ENCODE measurements at regions of chr9 and their contacts with region 1.

Region 1: DNA sequence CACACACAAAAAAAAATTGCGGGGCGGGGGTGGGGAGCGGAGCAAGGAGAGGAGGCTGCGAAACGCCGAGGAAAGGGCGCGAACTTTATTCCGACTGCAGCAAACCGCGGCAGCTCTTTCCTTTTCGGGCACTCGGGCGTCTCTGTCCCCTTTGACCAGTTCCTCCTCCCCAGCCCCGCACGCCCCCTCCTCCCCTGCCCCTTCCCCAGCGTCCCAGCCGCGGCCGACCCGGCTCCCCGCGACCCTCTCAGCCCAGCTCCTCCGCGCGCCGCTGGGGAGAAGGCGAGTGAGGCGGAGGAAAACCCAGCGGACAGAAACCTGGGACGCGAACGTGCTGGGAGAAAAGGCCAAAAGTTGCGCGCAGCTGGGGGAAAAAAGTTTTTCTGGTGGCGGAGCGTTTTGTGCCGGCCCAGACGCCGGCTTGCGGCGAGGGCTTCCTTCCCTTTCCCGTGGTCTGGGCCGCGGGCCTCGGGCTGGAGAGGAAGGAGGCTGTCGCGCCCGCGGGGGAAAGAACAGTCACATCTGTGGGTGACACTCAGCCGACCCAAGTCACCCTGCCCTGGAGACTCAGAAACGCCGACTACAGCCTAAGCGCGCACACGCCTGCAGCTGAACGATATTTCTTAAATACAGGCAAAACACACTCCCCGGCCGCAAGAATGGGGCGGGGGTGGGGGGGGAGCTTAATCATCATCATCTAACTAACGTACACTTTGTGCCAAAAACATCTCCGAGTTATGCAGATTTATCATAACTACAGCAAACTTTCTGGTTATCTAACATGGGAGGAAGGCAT is 1.1 kb upstream of the BNC2 start:
- DNase-seq: peak; percentile 41 to 55
- ATAC-seq: peak; percentile 67 to 78 (median 75)
- H3K4me3 ChIP-seq: peak overlapping the region; percentile 57
- H3K4me3 Mint-ChIP-seq: peak overlapping the region; percentile 99
- H3K27ac ChIP-seq: peak overlapping the region; percentile 11
- H3K27ac Mint-ChIP-seq: peak overlapping the region; percentile 79 to 84
- H3K4me1 ChIP-seq: peaks cover 22% of the 10 kb centered on the region
- H3K4me1 Mint-ChIP-seq: peaks cover 25 to 32% of the 10 kb centered on the region in 2 donors
- H3K27me3 ChIP-seq: peaks cover 6% of the 10 kb centered on the region
- H3K27me3 Mint-ChIP-seq: peaks cover 0 to 3% of the 10 kb centered on the region in 2 donors
- CTCF ChIP-seq: no peak

Region 2: GRCh38 chr9:16145196-16145950 is 726.2 kb before region 1 on chr9:
- intact Hi-C with region 1: no loop called
- DNase-seq: no peak
- ATAC-seq: no peak
- H3K4me3 ChIP-seq: no peak overlapping the region
- H3K4me3 Mint-ChIP-seq: no peak overlapping the region
- H3K27ac ChIP-seq: no peak overlapping the region
- H3K27ac Mint-ChIP-seq: no peak overlapping the region
- H3K4me1 ChIP-seq: no peaks in the 10 kb centered on the region
- H3K4me1 Mint-ChIP-seq: no peaks in the 10 kb centered on the region
- H3K27me3 ChIP-seq: no peaks in the 10 kb centered on the region
- H3K27me3 Mint-ChIP-seq: peaks cover 5 to 28% of the 10 kb centered on the region in 2 donors
- CTCF ChIP-seq: no peak

Region 3: DNA sequence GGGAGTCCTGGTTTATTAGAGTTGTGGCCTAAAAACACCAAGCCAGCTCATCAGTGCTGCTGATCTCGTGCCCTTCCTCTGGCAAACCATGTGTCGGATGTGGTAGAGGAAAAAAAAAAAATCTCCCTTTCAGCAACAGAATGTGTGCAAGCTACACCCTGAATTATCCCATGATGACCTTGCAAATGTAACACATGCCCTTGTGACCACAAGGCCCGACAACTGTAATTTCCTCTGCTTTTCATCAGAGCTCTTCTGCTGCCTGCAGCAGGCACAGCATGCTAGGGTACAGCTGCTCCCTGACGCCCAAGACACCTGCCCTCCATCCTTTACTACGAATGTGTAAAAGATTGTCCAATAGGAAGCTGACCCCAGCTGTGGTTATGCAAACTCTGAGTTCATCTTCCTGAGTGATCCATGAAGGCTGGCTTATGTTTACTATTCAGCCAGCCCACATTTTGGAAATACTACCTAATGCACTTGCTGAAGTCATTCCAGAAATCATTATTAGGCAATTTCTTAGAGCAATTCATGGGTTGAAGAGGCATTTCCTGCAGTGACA is 13.5 kb after region 1 on chr9:
- intact Hi-C with region 1: loop called (anchors 1 kb)
- DNase-seq: peak; percentile 54 to 64
- ATAC-seq: peak; percentile 79 to 93 (median 83)
- H3K4me3 ChIP-seq: no peak overlapping the region
- H3K4me3 Mint-ChIP-seq: peak overlapping the region; percentile 84
- H3K27ac ChIP-seq: no peak overlapping the region
- H3K27ac Mint-ChIP-seq: peak overlapping the region; percentile 85 to 86
- H3K4me1 ChIP-seq: peaks cover 28% of the 10 kb centered on the region
- H3K4me1 Mint-ChIP-seq: peaks cover 61 to 68% of the 10 kb centered on the region in 2 donors
- H3K27me3 ChIP-seq: no peaks in the 10 kb centered on the region
- H3K27me3 Mint-ChIP-seq: no peaks in the 10 kb centered on the region
- CTCF ChIP-seq: no peak

Region 4: DNA sequence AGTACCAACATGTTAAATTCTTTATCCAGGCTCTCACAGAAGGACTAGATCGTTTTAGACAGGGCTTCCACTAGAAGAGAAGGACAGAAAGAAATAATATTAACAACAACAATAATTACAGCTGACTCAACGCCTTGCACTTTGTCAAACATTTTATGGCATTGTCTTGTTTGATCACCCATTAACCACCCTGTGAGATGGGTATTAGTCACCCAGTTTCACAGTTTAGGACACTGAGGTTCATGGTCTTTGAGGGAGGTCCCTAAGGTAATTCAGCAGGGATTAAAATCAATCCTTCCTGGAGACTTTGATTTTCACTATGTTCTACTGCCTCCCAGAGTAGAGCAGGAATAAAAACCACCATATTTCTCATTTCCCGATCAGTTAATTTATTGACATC is 50.3 kb after region 1 on chr9:
- intact Hi-C with region 1: loop called (anchors 5 kb)
- DNase-seq: no peak
- ATAC-seq: peak in 1 of 3 donors; percentile 15
- H3K4me3 ChIP-seq: no peak overlapping the region
- H3K4me3 Mint-ChIP-seq: no peak overlapping the region
- H3K27ac ChIP-seq: no peak overlapping the region
- H3K27ac Mint-ChIP-seq: no peak overlapping the region
- H3K4me1 ChIP-seq: peaks cover 4% of the 10 kb centered on the region
- H3K4me1 Mint-ChIP-seq: peaks cover 5 to 14% of the 10 kb centered on the region in 2 donors
- H3K27me3 ChIP-seq: no peaks in the 10 kb centered on the region
- H3K27me3 Mint-ChIP-seq: peaks cover 6 to 10% of the 10 kb centered on the region in 2 donors
- CTCF ChIP-seq: no peak

Region 5: DNA sequence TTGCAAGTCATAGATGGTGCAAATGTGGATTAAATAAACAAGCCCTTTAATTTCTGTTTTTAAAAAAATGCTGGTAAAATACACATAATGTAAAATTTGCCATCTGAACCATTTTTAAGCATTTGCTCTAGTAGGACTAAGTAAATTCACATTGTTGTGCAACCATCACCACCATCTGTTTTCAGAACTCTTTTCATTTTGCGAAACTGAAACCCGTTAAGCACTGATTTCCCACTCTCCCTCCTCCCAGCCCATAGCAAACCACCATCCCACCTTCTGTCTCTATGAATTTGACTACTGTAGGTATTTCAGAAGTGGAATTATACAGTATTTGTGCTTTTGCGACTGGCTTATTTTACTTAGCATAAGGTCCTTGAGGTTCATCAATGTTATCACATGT is 160.0 kb after region 1 on chr9:
- intact Hi-C with region 1: no loop called
- DNase-seq: no peak
- ATAC-seq: no peak
- H3K4me3 ChIP-seq: no peak overlapping the region
- H3K4me3 Mint-ChIP-seq: no peak overlapping the region
- H3K27ac ChIP-seq: no peak overlapping the region
- H3K27ac Mint-ChIP-seq: no peak overlapping the region
- H3K4me1 ChIP-seq: no peaks in the 10 kb centered on the region
- H3K4me1 Mint-ChIP-seq: no peaks in the 10 kb centered on the region
- H3K27me3 ChIP-seq: no peaks in the 10 kb centered on the region
- H3K27me3 Mint-ChIP-seq: peaks cover 0 to 7% of the 10 kb centered on the region in 2 donors
- CTCF ChIP-seq: no peak

Region 6: DNA sequence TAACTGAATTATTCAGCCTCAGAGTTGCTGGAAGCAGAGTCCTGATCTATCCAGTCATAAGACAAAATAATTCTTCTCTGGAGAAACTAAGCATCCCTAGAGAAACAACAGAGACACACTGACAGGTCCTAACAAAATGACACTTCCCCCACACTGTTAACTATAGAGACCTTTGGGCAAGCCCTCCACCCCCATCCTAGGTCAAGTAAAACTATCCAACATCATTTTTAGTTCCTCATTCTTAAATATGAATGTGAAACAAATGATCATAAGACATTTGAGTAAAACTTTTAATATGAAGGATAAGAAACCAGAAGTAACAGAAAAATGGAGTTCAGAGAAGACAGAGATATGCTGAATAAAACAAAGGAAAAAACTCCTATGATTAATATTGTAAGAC is 294.2 kb after region 1 on chr9:
- intact Hi-C with region 1: no loop called
- DNase-seq: no peak
- ATAC-seq: no peak
- H3K4me3 ChIP-seq: no peak overlapping the region
- H3K4me3 Mint-ChIP-seq: no peak overlapping the region
- H3K27ac ChIP-seq: no peak overlapping the region
- H3K27ac Mint-ChIP-seq: no peak overlapping the region
- H3K4me1 ChIP-seq: no peaks in the 10 kb centered on the region
- H3K4me1 Mint-ChIP-seq: no peaks in the 10 kb centered on the region
- H3K27me3 ChIP-seq: no peaks in the 10 kb centered on the region
- H3K27me3 Mint-ChIP-seq: no peaks in the 10 kb centered on the region
- CTCF ChIP-seq: no peak